SK-N-SH (cell line): ENCODE measurements at regions of chr2 and their contacts with region 1.

Region 1: DNA sequence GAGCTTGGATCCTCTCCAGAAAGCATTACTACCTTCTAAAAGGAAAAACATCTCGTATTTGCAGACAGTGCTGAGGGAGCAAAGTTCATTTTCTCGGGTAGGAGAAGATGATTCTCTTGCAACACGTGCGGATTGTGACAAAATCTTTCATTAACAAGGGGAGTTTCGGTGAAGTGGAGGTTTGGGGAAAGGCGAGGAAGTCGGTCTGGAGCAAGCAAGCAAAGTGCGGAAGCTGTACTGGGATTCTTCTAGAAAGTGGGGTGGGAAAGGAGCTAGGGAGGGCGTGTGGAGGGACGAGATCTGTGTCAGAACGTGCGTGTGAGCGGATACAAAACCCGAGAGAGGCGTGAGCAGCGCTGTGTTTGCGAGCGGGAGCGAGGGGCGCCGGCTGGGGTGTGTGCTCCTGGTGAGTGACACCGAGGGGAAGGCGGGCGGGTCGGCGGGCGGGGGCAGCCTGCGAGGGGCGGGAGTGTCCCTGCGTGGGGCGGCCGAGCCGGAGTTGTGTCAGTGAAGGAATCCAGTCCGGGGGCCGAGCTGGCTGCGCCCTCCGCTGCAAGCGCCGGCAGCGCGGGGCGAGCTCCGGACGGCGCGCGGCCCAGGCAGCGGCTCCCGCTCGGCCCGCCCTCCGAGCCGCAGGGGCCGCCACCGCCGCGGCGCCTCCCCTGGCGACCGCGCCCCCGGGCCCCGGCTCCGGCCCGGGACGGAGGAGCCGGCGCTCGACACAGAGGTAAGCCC is at the start of gene SPATS2L:
- DNase-seq: no peak
- H3K4me3 ChIP-seq: peak within 1 kb of the TSS; percentile 67 to 95
- H3K27ac ChIP-seq: peak within 1 kb of the TSS; percentile 71 to 92
- H3K4me1 ChIP-seq: peaks cover 6 to 8% of the 10 kb centered on the region in 2 experiments
- H3K27me3 ChIP-seq: no peaks in the 10 kb centered on the region
- CTCF ChIP-seq: no peak
- EP300 ChIP-seq: no peak
- RAD21 ChIP-seq: no peak
- polyA plus RNA-seq, gene SPATS2L: 77.7 and 86.8 TPM in 2 replicates

Region 2: GRCh38 chr2:199979832-199980628 is 326.3 kb before region 1 on chr2:
- CTCF ChIA-PET with region 1: interaction called, 14 read pairs
- POLR2A ChIA-PET with region 1: no interaction called
- DNase-seq: peak; percentile 52
- H3K4me3 ChIP-seq: peak overlapping the region; percentile 12 to 13; a peak in 2 of 4 replicates
- H3K27ac ChIP-seq: no peak overlapping the region
- H3K4me1 ChIP-seq: peaks cover 8% of the 10 kb centered on the region in 2 experiments; a peak in 3 of 4 replicates
- H3K27me3 ChIP-seq: no peaks in the 10 kb centered on the region
- CTCF ChIP-seq: peak; percentile 98
- EP300 ChIP-seq: 0 out of 4 replicates have a peak, but pooled peaks of 1 of the 2 experiments have one; percentile 3
- RAD21 ChIP-seq: peak; percentile 93

Region 3: DNA sequence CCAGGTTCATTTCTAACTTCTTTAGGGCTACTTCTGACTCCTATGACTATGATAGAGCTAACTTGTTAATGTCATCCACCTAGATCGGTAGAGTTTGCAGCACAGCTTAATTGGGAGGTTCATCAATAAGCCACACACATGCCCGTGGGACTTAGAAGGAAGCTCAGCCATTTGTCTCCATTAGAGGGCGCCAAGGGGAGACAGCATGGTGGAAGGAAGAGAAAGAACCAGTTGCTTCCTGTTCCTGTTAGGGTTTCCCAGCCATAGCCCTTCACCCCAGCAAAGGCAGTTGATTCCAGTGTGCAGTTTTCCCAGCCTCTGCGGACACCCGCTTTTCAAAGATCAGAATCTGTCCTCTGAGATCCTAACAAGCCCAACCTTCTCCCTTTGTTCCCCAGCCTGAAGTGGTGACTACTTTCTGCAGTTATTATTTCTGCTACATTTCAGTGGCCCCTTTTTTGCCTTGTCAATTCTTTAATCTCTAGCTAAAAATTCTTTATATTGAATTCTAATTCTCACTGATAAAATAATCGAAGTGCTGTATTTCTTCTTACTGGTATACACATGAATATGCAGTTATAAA is 320.6 kb before region 1 on chr2:
- CTCF ChIA-PET with region 1: interaction called, 14 read pairs
- POLR2A ChIA-PET with region 1: no interaction called
- DNase-seq: peak; percentile 38
- H3K4me3 ChIP-seq: peak overlapping the region in 1 of 2 experiments; percentile 24; a peak in 1 of 4 replicates
- H3K27ac ChIP-seq: no peak overlapping the region
- H3K4me1 ChIP-seq: no peaks in the 10 kb centered on the region; a peak in 2 of 4 replicates
- H3K27me3 ChIP-seq: no peaks in the 10 kb centered on the region
- CTCF ChIP-seq: peak; percentile 67
- EP300 ChIP-seq: no peak
- RAD21 ChIP-seq: peak; percentile 74

Region 4: DNA sequence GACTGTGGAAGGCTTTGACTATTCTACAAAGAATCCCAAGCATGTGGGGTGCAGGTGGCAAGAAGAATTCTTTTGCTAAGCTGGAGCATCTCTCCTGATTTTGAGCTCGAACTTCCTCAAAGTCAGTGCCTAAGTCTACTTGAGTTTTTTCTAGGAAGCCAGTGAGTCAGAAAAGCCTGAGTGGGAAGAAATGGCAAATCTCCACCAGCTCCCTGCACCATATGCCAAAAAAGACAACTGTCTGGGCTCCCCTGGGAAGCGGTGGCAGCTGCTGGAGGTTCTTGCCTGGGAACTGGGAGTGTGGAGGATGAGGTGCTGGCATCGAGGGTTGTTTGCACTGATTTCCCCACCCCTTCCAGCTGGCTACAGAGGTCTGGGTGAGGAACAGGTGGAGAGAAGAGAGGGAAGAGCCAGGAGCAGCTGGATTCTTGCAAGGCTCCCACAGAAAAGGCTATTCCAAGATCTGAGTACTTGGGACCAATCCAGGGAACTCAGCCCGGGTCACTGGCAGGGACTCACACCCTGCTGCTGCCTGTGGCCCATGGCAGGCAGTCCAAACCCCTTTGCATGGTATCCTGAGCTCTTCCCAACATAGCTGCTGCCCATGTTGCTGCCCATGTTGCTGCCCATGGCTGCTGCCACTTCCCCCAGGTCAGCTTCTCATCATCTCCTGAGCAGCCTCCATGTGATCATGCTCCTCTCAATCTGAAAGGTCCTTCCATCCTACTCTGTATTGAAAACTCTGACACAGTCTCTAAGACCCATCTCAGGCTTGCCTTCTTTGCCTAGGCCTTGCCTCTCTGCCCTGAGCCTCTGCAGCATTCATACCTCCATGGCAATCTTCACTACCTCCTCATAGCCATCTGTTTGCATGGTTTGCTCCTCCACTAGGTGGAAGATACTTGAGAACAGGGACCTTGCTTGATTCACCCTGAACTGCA is 128.1 kb before region 1 on chr2:
- CTCF ChIA-PET with region 1: no interaction called
- POLR2A ChIA-PET with region 1: no interaction called
- DNase-seq: no peak
- H3K4me3 ChIP-seq: no peak overlapping the region
- H3K27ac ChIP-seq: no peak overlapping the region
- H3K4me1 ChIP-seq: no peaks in the 10 kb centered on the region
- H3K27me3 ChIP-seq: no peaks in the 10 kb centered on the region
- CTCF ChIP-seq: no peak
- EP300 ChIP-seq: no peak
- RAD21 ChIP-seq: no peak